ENCODE measurements at regions of chr13 and their contacts with region 1.

Region 1: DNA sequence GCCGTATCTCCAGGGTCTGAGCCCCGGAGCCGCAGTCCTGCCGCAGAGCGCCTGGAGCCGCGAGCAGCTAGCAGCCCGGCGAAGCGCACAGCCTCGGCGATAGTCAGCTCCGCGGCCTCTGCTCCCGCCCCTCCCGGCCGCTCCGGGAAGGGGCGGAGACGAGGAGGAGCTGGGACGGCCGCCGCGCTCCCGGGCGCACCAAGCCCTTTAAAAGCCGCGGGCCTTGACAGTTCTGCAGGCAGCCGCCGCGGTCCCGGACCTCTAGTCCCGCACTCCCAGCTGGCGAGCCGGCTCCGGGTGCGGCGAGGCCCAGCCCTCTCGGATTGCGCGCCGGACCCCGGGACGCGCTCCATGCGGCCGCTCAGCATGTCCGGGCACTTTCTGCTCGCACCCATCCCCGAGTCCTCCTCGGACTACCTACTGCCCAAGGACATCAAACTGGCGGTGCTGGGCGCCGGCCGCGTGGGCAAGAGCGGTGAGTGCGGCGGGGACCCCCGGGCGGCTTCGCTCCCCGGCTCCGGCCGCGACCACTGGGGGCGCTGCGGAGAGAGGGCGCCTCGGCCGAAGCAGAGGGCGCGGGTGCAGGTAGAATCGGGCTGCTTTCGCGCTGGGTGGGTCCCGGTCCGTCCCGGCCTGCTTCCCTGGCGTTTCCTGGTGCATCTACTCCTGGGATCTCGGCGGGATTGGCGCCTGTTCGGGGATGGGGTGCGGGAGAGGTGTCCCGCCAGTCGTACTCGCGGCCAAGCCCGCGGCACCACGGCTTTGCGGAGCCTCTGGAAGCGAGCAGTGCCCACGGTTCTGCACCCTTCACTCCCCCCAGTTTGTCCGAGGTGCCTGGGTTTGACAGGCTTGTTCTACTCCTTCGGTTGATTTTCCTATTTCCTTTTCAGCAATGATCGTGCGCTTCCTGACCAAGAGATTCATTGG is at the start of gene RASL11A:
- DNase-seq: peak; percentile 82
- ATAC-seq: peak; percentile 91
- H3K4me3 Mint-ChIP-seq: peak within 1 kb of the TSS; percentile 79
- H3K27ac Mint-ChIP-seq: peak within 1 kb of the TSS; percentile 76
- H3K4me1 Mint-ChIP-seq: peaks cover 14% of the 10 kb centered on the region
- H3K27me3 Mint-ChIP-seq: peaks cover 2% of the 10 kb centered on the region
- total RNA-seq, gene RASL11A: 3.2 to 3.5 TPM

Region 2: GRCh38 chr13:25707726-25708125 is 1563.1 kb before region 1 on chr13:
- CTCF ChIA-PET with region 1: no interaction called
- POLR2A ChIA-PET with region 1: no interaction called
- intact Hi-C with region 1: no loop called
- DNase-seq: no peak
- ATAC-seq: no peak
- H3K4me3 Mint-ChIP-seq: no peak overlapping the region
- H3K27ac Mint-ChIP-seq: no peak overlapping the region
- H3K4me1 Mint-ChIP-seq: no peaks in the 10 kb centered on the region
- H3K27me3 Mint-ChIP-seq: no peaks in the 10 kb centered on the region

Region 3: DNA sequence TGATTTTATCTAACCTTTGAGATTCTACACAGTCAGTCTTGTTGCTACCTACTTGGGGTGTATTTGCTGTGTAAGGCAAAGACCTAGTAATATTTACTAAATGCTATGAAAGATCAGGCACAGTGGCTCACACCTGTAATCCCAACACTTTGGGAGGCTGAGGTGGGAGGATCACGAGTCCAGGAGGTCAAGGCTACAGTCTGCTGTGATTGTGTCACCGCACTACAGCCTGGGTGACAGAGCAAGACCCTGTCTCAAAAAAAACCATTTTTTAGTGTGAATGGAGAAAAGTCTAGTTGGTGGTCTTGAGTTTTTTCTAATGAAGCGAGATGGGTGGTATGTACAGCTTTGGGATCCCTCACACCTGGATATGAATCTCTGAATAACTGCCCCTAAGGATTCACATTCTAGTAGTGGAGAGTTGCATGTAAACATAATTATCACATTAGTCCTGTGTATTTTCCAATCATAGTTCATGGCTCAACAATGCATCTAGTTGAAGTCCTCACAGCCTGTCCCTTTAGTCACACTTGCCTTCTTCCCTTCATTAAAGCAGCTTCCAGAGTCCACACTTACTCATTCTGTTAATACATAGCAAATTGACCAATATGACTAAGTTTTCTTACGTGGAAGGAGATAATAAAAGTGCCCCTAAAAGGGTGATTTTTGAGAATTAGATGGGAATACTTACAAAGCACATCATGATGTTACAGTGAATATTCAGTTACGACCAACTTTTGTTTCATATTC is 12.0 kb before region 1 on chr13:
- CTCF ChIA-PET with region 1: interaction called, 14 read pairs
- POLR2A ChIA-PET with region 1: interaction called, 11 read pairs
- intact Hi-C with region 1: no loop called
- DNase-seq: no peak
- ATAC-seq: no peak
- H3K4me3 Mint-ChIP-seq: no peak overlapping the region
- H3K27ac Mint-ChIP-seq: peak overlapping the region; percentile 59
- H3K4me1 Mint-ChIP-seq: peaks cover 68% of the 10 kb centered on the region
- H3K27me3 Mint-ChIP-seq: no peaks in the 10 kb centered on the region

Region 4: DNA sequence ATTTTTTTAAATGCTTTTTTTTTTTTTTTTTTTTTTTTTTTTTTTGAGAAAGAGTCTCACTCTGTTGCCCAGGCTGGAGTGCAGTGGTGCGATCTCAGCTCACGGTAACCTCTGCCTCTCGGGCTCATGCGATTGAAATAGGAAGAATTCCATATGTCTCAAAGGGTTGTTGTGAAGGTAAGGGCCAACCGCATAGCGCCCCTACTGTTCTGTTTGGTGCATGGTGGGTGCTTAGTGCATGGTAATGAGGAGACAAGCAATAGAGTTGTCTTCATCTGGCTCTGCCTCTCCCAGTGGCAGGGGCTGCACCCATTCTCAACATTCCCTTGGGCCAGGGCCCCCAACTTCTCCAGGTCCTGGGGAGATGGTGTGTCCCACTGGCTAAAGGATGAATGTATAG is 68.4 kb after region 1 on chr13:
- CTCF ChIA-PET with region 1: interaction called, 5 read pairs
- POLR2A ChIA-PET with region 1: no interaction called
- intact Hi-C with region 1: loop called in 1 of 2 experiments (anchors 1 kb)
- DNase-seq: peak; percentile 71
- ATAC-seq: peak; percentile 90
- H3K4me3 Mint-ChIP-seq: no peak overlapping the region
- H3K27ac Mint-ChIP-seq: no peak overlapping the region
- H3K4me1 Mint-ChIP-seq: no peaks in the 10 kb centered on the region
- H3K27me3 Mint-ChIP-seq: peaks cover 7% of the 10 kb centered on the region

Region 5: GRCh38 chr13:27353166-27353583 is 82.3 kb after region 1 on chr13:
- CTCF ChIA-PET with region 1: interaction called, 6 read pairs
- POLR2A ChIA-PET with region 1: no interaction called
- intact Hi-C with region 1: loop called (anchors 2 to 5 kb)
- DNase-seq: peak; percentile 71
- ATAC-seq: peak; percentile 98
- H3K4me3 Mint-ChIP-seq: peak overlapping the region; percentile 48
- H3K27ac Mint-ChIP-seq: peak overlapping the region; percentile 58
- H3K4me1 Mint-ChIP-seq: peaks cover 19% of the 10 kb centered on the region
- H3K27me3 Mint-ChIP-seq: peaks cover 11% of the 10 kb centered on the region

Region 6: DNA sequence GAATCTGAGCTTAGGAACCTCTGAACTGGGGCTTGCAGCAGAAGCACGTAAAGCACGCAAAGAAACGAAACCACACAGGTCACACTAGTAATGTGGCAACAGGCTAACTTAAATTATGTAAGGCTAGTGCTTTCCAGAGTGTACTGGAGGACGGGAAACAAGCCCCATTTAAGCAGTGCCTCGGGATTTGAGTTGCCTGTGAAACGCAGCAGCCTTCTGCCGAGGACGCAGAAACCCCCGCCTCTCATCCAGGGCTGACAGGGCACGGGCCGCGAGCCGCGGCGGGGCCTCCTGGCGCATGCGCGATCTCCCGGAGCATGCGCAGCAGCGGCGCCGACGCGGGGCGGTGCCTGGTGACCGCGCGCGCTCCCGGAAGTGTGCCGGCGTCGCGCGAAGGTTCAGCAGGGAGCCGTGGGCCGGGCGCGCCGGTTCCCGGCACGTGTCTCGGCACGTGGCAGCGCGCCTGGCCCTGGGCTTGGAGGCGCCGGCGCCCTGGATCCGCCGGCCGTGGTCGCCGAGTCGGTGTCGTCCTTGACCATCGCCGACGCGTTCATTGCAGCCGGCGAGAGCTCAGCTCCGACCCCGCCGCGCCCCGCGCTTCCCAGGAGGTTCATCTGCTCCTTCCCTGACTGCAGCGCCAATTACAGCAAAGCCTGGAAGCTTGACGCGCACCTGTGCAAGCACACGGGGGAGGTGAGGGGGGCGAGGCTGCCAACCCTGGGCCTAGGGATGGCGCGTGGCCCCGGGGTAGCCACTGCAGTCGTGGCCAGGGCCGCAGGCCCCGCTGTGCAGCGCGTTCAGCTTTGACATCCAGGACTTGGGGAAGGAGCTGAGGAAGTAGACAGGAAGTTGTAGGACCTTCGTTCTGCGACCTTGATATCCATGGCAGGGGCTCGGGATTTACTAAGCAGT is 153.6 kb after region 1 on chr13 and contains the start of gene GTF3A:
- CTCF ChIA-PET with region 1: no interaction called
- POLR2A ChIA-PET with region 1: no interaction called
- intact Hi-C with region 1: loop called in 1 of 2 experiments (anchors 5 kb)
- DNase-seq: peak; percentile 92
- ATAC-seq: peak; percentile 66
- H3K4me3 Mint-ChIP-seq: peak within 1 kb of the TSS; percentile 80
- H3K27ac Mint-ChIP-seq: peak within 1 kb of the TSS; percentile 97
- H3K4me1 Mint-ChIP-seq: peaks cover 45% of the 10 kb centered on the region
- H3K27me3 Mint-ChIP-seq: no peaks in the 10 kb centered on the region
- total RNA-seq, gene GTF3A: 177 to 208 TPM

Region 7: DNA sequence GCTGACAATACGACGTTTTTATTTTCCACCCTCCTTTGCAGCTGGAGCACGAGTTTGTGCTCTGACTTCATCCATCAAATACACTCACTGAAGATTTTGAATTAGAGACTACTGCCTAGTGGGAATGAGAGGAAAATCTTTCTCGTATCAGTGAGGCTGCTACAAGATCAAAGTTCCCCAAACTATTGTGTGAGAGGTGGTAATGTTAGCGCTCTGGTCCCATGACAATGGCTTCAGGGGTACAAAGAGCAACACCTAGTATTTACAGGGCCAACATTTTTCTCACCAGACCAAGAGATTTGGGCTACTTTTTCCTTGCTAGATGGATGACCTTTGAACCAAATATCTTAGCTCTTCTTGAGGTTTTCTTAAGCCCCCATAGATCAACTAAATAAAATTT is 618.6 kb after region 1 on chr13:
- CTCF ChIA-PET with region 1: no interaction called
- POLR2A ChIA-PET with region 1: no interaction called
- intact Hi-C with region 1: no loop called
- DNase-seq: no peak
- ATAC-seq: no peak
- H3K4me3 Mint-ChIP-seq: no peak overlapping the region
- H3K27ac Mint-ChIP-seq: no peak overlapping the region
- H3K4me1 Mint-ChIP-seq: no peaks in the 10 kb centered on the region
- H3K27me3 Mint-ChIP-seq: peaks cover 23% of the 10 kb centered on the region